HEK293 (cell line): ENCODE measurements at regions of chr16 and their contacts with region 1.

Region 1: GRCh38 chr16:10918294-10919002 is 23.8 kb downstream of the DEXI start:
- H3K4me3 ChIP-seq: no peak overlapping the region
- H3K27ac ChIP-seq: no peak overlapping the region
- H3K4me1 ChIP-seq: no peaks in the 10 kb centered on the region
- CTCF ChIP-seq: peak; percentile 67; the same call in 1 of the 2 replicates

Region 2: GRCh38 chr16:10906914-10907756 is 11.3 kb before region 1 on chr16:
- CTCF ChIA-PET with region 1: interaction called, 22 read pairs
- POLR2A ChIA-PET with region 1: no interaction called
- H3K4me3 ChIP-seq: no peak overlapping the region
- H3K27ac ChIP-seq: no peak overlapping the region
- H3K4me1 ChIP-seq: no peaks in the 10 kb centered on the region
- CTCF ChIP-seq: no peak